Cardiac septum (tissue), 1 donor: ENCODE measurements at regions of chr13 and their contacts with region 1.

Region 1: GRCh38 chr13:108895220-108895704 is 265.9 kb downstream of the MYO16 start:
- DNase-seq: no peak

Region 2: DNA sequence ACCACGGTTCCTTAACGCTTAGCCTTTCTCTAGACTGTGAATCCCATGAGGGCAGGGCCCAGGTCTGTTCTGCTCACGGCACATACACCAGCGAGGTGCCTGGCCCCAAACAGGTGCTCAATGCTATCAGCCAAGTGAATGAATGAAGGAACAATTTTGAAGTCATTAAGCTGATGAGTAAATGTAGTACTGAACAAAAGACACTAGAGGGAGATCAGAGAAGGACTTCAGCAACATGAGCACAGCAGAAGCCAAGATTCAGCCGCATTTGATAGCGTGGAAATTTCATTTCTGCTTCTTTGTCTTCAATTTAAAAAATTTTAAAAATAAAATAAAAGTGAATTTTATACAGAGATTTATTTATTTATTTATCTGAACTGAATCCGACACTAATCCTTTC is 285.9 kb before region 1 on chr13:
- intact Hi-C with region 1: loop called (anchors 2 kb)
- DNase-seq: no peak

Region 3: DNA sequence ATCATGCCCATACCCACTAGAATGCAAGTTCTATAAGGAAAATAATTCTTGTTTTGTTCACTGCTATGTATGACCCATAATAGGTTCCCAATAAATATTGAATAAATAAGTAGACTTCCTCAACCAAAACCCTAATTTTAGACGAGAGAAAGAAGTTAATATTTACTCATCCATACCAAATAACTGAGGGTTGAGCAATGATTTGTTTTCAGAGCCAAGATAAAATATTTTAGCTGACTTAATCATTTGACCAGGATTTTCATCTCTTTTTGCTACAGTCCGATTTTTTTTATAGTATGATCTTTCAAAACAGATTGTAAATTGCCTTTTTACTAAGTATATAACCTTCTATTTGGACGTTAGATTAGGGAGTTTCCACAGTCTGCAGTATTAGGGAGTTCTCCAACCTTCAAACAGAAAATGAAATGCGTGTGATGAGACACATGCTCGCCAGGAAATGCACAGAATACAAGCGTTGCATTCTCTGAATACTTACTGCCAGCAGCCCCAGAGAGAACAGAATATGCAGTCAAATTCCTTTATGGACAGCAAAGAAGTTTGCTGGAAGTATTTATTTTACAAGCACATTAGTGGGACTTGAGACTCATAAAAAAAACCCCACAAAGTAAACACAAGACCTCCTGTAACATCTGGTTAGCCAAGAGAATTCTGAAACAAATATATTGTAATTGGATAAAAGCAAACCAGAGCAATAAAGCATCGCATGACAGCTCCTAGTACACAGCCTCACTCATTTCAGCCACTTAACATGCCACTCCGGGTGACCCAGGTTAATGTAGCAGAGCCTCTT is 35.9 kb before region 1 on chr13:
- intact Hi-C with region 1: no loop called
- DNase-seq: no peak